ENCODE measurements at regions of chr15 and their contacts with region 1.

Region 1: DNA sequence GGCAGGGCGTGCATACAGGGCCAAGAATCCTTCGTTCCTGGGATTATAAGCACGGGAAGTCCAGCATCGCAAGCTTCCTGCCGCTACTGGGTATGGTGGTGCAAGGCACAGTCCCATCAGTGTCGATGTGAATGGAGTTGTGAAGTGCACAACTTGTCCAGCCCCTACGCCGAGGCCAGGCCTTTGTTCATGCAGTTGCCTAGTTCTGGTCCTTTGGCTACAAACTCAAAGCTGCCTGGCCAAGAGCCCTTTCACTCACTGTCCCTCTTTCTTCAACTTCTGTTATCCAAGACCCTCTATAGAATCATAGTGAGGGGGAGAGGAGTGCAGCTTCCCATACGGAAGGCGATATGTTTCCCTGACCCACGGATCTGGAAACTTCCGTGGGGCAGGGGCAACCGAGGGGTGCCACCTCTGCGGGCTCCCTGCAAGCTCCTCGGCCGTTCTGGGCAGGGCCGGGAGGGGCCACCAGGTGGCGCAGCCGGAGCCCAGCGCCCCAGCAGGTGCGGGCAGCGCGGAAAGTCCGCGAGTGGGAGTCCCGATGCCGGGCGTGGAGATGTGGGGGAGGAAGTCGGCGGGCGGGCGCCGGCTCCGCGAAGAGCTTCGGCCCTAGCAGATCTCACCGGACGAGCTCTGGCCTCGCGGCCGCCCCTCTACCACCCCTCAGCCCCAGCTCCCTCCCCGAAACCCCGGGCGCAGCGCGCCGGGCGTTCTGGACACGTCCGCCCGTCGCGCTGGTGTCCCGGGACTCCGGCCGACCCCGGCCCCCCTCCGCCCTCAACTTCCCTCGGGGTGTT is 693 bp downstream of the RASGRP1 start:
- DNase-seq: peak; percentile 95
- ATAC-seq: peak; percentile 69
- H3K4me3 Mint-ChIP-seq: peak overlapping the region; percentile 99
- H3K27ac Mint-ChIP-seq: peak overlapping the region; percentile 93
- H3K4me1 Mint-ChIP-seq: peaks cover 55% of the 10 kb centered on the region
- H3K27me3 Mint-ChIP-seq: no peaks in the 10 kb centered on the region

Region 2: DNA sequence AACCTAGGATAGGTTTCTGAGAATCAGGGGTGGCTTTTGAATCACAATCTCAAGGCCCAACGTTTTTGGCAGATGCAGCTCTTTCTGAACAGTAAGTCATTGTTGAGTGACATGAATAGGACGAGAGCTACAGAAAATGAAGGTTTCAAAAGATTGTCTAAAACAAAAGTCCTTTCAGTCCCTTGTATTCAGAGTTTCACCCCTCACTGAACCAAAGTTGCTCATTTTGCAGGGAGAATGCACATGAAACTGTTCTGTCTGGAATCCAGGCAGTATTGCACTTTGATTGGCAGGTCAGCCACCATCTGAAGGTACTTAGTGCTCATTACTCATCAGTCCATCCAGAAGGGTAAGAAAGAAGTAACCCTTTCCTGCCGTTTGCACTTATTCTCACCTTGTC is 24.8 kb after region 1 on chr15:
- POLR2A ChIA-PET with region 1: interaction called, 10 read pairs
- DNase-seq: no peak
- ATAC-seq: peak; percentile 22
- H3K4me3 Mint-ChIP-seq: no peak overlapping the region
- H3K27ac Mint-ChIP-seq: peak overlapping the region; percentile 16
- H3K4me1 Mint-ChIP-seq: peaks cover 33% of the 10 kb centered on the region
- H3K27me3 Mint-ChIP-seq: peaks cover 2% of the 10 kb centered on the region

Region 3: GRCh38 chr15:38631126-38632075 is 67.5 kb after region 1 on chr15:
- POLR2A ChIA-PET with region 1: interaction called, 10 read pairs
- DNase-seq: no peak
- ATAC-seq: peak; percentile 43
- H3K4me3 Mint-ChIP-seq: peak overlapping the region; percentile 1
- H3K27ac Mint-ChIP-seq: peak overlapping the region; percentile 35
- H3K4me1 Mint-ChIP-seq: peaks cover 34% of the 10 kb centered on the region
- H3K27me3 Mint-ChIP-seq: no peaks in the 10 kb centered on the region

Region 4: DNA sequence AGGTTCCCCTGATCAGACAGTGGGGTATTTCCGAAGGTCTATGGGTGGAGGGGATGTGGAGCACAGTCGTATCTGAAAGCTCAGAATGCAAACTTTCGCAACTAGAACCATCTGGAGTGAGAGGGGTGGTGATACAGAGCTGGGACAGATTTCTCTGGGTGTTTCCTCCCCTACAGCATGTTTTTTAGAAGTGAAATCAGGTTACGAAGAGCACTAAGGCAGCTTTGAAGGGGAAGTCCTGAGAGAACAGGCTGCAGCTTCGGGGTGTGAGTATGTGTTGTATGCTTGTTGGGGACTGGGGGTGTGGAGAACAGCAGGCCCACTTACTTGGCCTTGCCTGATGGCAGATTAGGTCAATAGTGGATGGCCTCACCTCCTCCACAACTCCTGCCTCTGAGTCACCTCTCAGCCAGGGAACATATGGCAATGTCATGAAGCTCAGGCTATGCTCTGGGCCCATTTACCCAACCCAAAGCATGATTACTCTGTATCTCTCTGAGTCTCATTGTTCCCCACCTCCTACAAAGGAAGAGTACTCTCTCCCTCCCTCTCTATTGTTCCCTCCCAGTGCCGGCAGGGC is 107.8 kb after region 1 on chr15:
- POLR2A ChIA-PET with region 1: interaction called, 62 read pairs
- DNase-seq: peak; percentile 48
- ATAC-seq: peak; percentile 35
- H3K4me3 Mint-ChIP-seq: peak overlapping the region; percentile 77
- H3K27ac Mint-ChIP-seq: peak overlapping the region; percentile 94
- H3K4me1 Mint-ChIP-seq: peaks cover 73% of the 10 kb centered on the region
- H3K27me3 Mint-ChIP-seq: no peaks in the 10 kb centered on the region

Region 5: DNA sequence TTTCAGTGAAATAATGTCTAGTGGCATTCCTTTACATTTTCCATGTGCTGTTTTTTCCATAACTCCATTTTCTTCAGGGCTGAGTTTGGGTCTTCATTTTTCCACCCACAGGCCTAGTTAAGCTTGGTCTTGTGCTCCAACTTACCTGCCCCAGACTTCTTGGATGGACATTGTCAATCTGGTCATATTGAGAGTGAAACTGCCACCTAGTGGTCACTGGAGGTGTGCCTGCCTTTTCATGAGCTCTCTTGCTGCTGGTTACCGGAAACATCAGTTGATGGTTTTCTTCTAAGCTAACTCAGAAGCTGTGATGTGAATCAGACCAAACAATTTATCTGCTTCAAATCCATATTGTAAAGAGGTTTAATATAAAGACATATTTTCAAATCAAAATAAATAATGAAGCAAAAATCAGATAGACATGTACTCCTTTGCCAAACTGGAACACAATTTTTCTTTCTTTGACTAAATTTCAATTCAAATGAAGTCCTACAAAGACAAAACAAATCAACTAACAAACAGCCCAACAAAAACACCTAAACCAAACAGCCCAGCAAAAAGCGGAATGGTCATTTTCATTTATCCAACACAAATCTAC is 135.8 kb after region 1 on chr15:
- POLR2A ChIA-PET with region 1: interaction called, 27 read pairs
- DNase-seq: peak; percentile 58
- ATAC-seq: peak; percentile 45
- H3K4me3 Mint-ChIP-seq: peak overlapping the region; percentile 1
- H3K27ac Mint-ChIP-seq: peak overlapping the region; percentile 75
- H3K4me1 Mint-ChIP-seq: peaks cover 51% of the 10 kb centered on the region
- H3K27me3 Mint-ChIP-seq: peaks cover 6% of the 10 kb centered on the region

Measured in activated naive CD8-positive, alpha-beta T cell treated with anti-CD3 and anti-CD28 coated beads, Interleukin-2, amount 10 ng/mL, durations not matched to agents 7 days and 5 days (primary cell).